CD4-positive, alpha-beta T cell (primary cell): ENCODE measurements at regions of chr6 and their contacts with region 1.

Region 1: GRCh38 chr6:108558372-108559096 is 2.2 kb upstream of the FOXO3 start:
- DNase-seq: peak; percentile 93 to 100 (median 97)
- ATAC-seq: peak; percentile 67
- H3K4me3 ChIP-seq: peak overlapping the region; percentile 99
- H3K4me3 Mint-ChIP-seq: peak overlapping the region; percentile 99
- H3K27ac ChIP-seq: peak overlapping the region; percentile 99 to 100
- H3K27ac Mint-ChIP-seq: peak overlapping the region; percentile 100
- H3K4me1 ChIP-seq: peaks cover 29% of the 10 kb centered on the region
- H3K4me1 Mint-ChIP-seq: peaks cover 20% of the 10 kb centered on the region
- H3K27me3 ChIP-seq: no peaks in the 10 kb centered on the region
- H3K27me3 Mint-ChIP-seq: no peaks in the 10 kb centered on the region
- CTCF ChIP-seq: no peak

Region 2: GRCh38 chr6:108260809-108261569 is 297.5 kb before region 1 on chr6 and contains the start of gene SNX3:
- CTCF ChIA-PET with region 1: interaction called, 3 read pairs
- POLR2A ChIA-PET with region 1: interaction called, 37 read pairs
- intact Hi-C with region 1: loop called in 1 of 2 experiments (anchors 2 kb)
- DNase-seq: peak; percentile 71 to 95 (median 83)
- ATAC-seq: peak; percentile 80
- H3K4me3 ChIP-seq: peak within 1 kb of the TSS; percentile 98
- H3K4me3 Mint-ChIP-seq: peak within 1 kb of the TSS; percentile 88
- H3K27ac ChIP-seq: peak within 1 kb of the TSS; percentile 88 to 90
- H3K27ac Mint-ChIP-seq: peak within 1 kb of the TSS; percentile 91
- H3K4me1 ChIP-seq: peaks cover 34% of the 10 kb centered on the region
- H3K4me1 Mint-ChIP-seq: peaks cover 36% of the 10 kb centered on the region
- H3K27me3 ChIP-seq: no peaks in the 10 kb centered on the region
- H3K27me3 Mint-ChIP-seq: no peaks in the 10 kb centered on the region
- CTCF ChIP-seq: no peak
- total RNA-seq, gene SNX3: 39.8 to 40.8 TPM

Region 3: GRCh38 chr6:108576709-108577108 is 18.2 kb after region 1 on chr6:
- CTCF ChIA-PET with region 1: no interaction called
- POLR2A ChIA-PET with region 1: interaction called, 11 read pairs
- intact Hi-C with region 1: no loop called
- DNase-seq: peak in 2 of 14 experiments; percentile 25 to 34
- ATAC-seq: peak; percentile 58
- H3K4me3 ChIP-seq: no peak overlapping the region
- H3K4me3 Mint-ChIP-seq: peak overlapping the region; percentile 9
- H3K27ac ChIP-seq: no peak overlapping the region
- H3K27ac Mint-ChIP-seq: peak overlapping the region; percentile 8
- H3K4me1 ChIP-seq: peaks cover 20% of the 10 kb centered on the region
- H3K4me1 Mint-ChIP-seq: peaks cover 70% of the 10 kb centered on the region
- H3K27me3 ChIP-seq: no peaks in the 10 kb centered on the region
- H3K27me3 Mint-ChIP-seq: no peaks in the 10 kb centered on the region
- CTCF ChIP-seq: no peak

Region 4: DNA sequence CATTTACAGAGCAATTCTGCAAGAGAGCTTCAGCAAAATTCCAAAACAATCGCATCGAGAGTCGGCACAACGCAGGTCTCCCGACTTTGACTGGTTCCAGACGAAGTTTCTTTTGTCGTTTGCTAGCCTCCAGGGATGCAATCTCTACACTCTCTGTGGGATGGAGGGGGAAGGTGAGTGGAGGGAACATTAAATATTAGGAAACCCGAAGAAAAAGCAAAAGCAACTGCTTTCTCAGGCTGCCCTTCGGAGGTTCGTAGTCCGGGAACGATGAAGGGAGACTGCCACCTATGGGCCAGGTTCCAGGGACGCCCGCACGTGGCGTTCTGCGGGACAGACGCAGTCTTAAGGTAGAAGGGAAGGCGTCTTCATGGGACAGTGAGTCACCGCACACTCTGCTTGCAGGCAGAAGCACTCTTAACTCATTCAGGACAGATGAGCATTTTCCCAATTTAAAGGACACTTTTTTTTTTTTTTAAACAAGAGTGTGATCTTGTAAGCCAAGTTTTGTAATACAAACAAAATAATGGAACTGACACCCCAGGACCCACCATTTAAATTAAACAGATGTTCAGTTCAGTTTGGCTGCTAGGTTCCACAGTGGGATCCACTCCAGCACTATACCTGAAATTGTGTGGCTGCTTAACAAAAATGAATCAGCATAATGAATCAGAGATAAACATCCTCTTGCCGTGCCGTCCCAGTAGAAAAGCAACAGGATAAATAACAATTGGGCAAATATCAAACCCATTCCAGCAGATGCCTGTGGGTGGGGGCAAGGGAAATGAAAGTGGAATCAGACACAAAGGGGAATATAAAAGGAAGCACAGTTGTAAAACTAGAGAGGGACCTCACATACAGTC is 223.9 kb after region 1 on chr6:
- CTCF ChIA-PET with region 1: no interaction called
- POLR2A ChIA-PET with region 1: interaction called, 11 read pairs
- intact Hi-C with region 1: loop called in 1 of 2 experiments (anchors 5 kb)
- DNase-seq: peak; percentile 69 to 89 (median 75)
- ATAC-seq: peak; percentile 100
- H3K4me3 ChIP-seq: peak overlapping the region; percentile 45
- H3K4me3 Mint-ChIP-seq: peak overlapping the region; percentile 87
- H3K27ac ChIP-seq: no peak overlapping the region
- H3K27ac Mint-ChIP-seq: no peak overlapping the region
- H3K4me1 ChIP-seq: peaks cover 11% of the 10 kb centered on the region
- H3K4me1 Mint-ChIP-seq: peaks cover 11% of the 10 kb centered on the region
- H3K27me3 ChIP-seq: no peaks in the 10 kb centered on the region
- H3K27me3 Mint-ChIP-seq: no peaks in the 10 kb centered on the region
- CTCF ChIP-seq: peak; percentile 86

Region 5: GRCh38 chr6:109009236-109009961 is 450.9 kb after region 1 on chr6:
- CTCF ChIA-PET with region 1: no interaction called
- POLR2A ChIA-PET with region 1: interaction called, 44 read pairs
- intact Hi-C with region 1: loop called (anchors 5 kb)
- DNase-seq: peak; percentile 81 to 97 (median 90)
- ATAC-seq: peak; percentile 94
- H3K4me3 ChIP-seq: peak overlapping the region; percentile 93
- H3K4me3 Mint-ChIP-seq: peak overlapping the region; percentile 100
- H3K27ac ChIP-seq: peak overlapping the region; percentile 84 to 92
- H3K27ac Mint-ChIP-seq: peak overlapping the region; percentile 99
- H3K4me1 ChIP-seq: peaks cover 18% of the 10 kb centered on the region
- H3K4me1 Mint-ChIP-seq: peaks cover 73% of the 10 kb centered on the region
- H3K27me3 ChIP-seq: no peaks in the 10 kb centered on the region
- H3K27me3 Mint-ChIP-seq: no peaks in the 10 kb centered on the region
- CTCF ChIP-seq: peak; percentile 14

Region 6: GRCh38 chr6:109455502-109456282 is 897.2 kb after region 1 on chr6 and contains the start of gene MICAL1:
- CTCF ChIA-PET with region 1: no interaction called
- POLR2A ChIA-PET with region 1: interaction called, 11 read pairs
- intact Hi-C with region 1: no loop called
- DNase-seq: peak; percentile 45 to 92 (median 70)
- ATAC-seq: peak; percentile 58
- H3K4me3 ChIP-seq: peak within 1 kb of the TSS; percentile 97
- H3K4me3 Mint-ChIP-seq: peak within 1 kb of the TSS; percentile 99
- H3K27ac ChIP-seq: peak within 1 kb of the TSS; percentile 91 to 94
- H3K27ac Mint-ChIP-seq: peak within 1 kb of the TSS; percentile 95
- H3K4me1 ChIP-seq: peaks cover 74% of the 10 kb centered on the region
- H3K4me1 Mint-ChIP-seq: peaks cover 66% of the 10 kb centered on the region
- H3K27me3 ChIP-seq: no peaks in the 10 kb centered on the region
- H3K27me3 Mint-ChIP-seq: no peaks in the 10 kb centered on the region
- CTCF ChIP-seq: no peak
- total RNA-seq, gene MICAL1: 106 to 107 TPM